ENCODE measurements at regions of chr5 and their contacts with region 1.

Region 1: GRCh38 chr5:73215891-73216610 is 43.1 kb downstream of the TMEM174 start:
- DNase-seq: peak; percentile 28 to 45
- ATAC-seq: peak; percentile 95 to 98
- H3K4me3 ChIP-seq: peak overlapping the region; percentile 34 to 71 (median 50)
- H3K27ac ChIP-seq: no peak overlapping the region
- H3K4me1 ChIP-seq: peaks cover 4 to 9% of the 10 kb centered on the region in 2 donors
- H3K27me3 ChIP-seq: peaks cover 34 to 62% (median 52%) of the 10 kb centered on the region in 3 donors
- CTCF ChIP-seq: peak; percentile 65 to 85 (median 84)
- POLR2A ChIP-seq: no peak

Region 2: GRCh38 chr5:72938206-72938605 is 277.8 kb before region 1 on chr5:
- in situ Hi-C with region 1: loop called in 1 of 4 experiments (anchors 25 kb)
- intact Hi-C with region 1: no loop called
- DNase-seq: no peak
- ATAC-seq: peak; percentile 42 to 44
- H3K4me3 ChIP-seq: no peak overlapping the region
- H3K27ac ChIP-seq: peak overlapping the region in 2 of 4 donors; percentile 29 to 41
- H3K4me1 ChIP-seq: no peaks in the 10 kb centered on the region
- H3K27me3 ChIP-seq: no peaks in the 10 kb centered on the region
- CTCF ChIP-seq: no peak
- POLR2A ChIP-seq: no peak

Region 3: DNA sequence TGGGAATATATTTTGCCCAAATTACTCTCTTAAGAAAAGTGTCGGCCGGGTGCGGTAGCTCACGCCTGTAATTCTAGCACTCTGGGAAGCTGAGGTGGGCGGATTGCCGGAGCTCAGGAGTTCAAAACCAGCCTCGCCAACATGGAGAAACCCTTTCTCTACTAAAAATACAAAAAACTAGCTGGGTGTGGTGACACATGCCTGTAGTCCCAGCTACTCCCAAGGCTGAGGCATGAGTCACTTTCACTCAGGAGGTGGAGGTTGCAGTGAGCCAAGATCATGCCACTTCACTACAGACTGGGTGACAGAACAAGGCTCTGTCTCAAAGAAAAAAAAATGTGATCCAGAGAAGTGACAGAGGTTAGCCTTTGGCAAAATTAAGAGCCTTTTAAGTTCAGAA is 122.1 kb before region 1 on chr5:
- in situ Hi-C with region 1: no loop called
- intact Hi-C with region 1: loop called (anchors 10 kb)
- DNase-seq: no peak
- ATAC-seq: no peak
- H3K4me3 ChIP-seq: no peak overlapping the region
- H3K27ac ChIP-seq: no peak overlapping the region
- H3K4me1 ChIP-seq: no peaks in the 10 kb centered on the region
- H3K27me3 ChIP-seq: no peaks in the 10 kb centered on the region
- CTCF ChIP-seq: no peak
- POLR2A ChIP-seq: no peak

Region 4: GRCh38 chr5:73303148-73304079 is 87.4 kb after region 1 on chr5:
- in situ Hi-C with region 1: no loop called
- intact Hi-C with region 1: loop called (anchors 10 kb)
- DNase-seq: no peak
- ATAC-seq: no peak
- H3K4me3 ChIP-seq: peak overlapping the region in 2 of 4 donors; percentile 1 to 15
- H3K27ac ChIP-seq: no peak overlapping the region
- H3K4me1 ChIP-seq: peaks cover 7 to 13% of the 10 kb centered on the region in 2 donors
- H3K27me3 ChIP-seq: peaks cover 67 to 80% (median 77%) of the 10 kb centered on the region in 3 donors
- CTCF ChIP-seq: no peak
- POLR2A ChIP-seq: no peak

Region 5: GRCh38 chr5:73448463-73449136 is 232.5 kb after region 1 on chr5 and contains the start of gene FOXD1:
- in situ Hi-C with region 1: loop called in 2 of 4 experiments (anchors 25 kb)
- intact Hi-C with region 1: loop called (anchors 2 kb)
- DNase-seq: peak; percentile 44 to 48
- ATAC-seq: peak; percentile 37 to 70
- H3K4me3 ChIP-seq: peak within 1 kb of the TSS; percentile 39 to 50 (median 46)
- H3K27ac ChIP-seq: no peak within 1 kb of the TSS
- H3K4me1 ChIP-seq: peaks cover 5 to 7% of the 10 kb centered on the region in 2 donors
- H3K27me3 ChIP-seq: peaks cover 84 to 88% (median 85%) of the 10 kb centered on the region in 3 donors
- CTCF ChIP-seq: no peak
- POLR2A ChIP-seq: peak in 1 of 2 donors; percentile 49
- total RNA-seq, gene FOXD1: 0.33 to 0.49 (median 0.41) TPM in 3 of 4 donors, not detected in the other

Measured in gastrocnemius medialis (tissue), 4 donors.